ENCODE measurements at regions of chr2 and their contacts with region 1.

Region 1: GRCh38 chr2:238558456-238559099 is 131.9 kb downstream of the ASB1 start:
- DNase-seq: no peak
- H3K4me3 ChIP-seq: no peak overlapping the region
- CTCF ChIP-seq: no peak

Region 2: GRCh38 chr2:238632181-238633060 is 73.8 kb after region 1 on chr2:
- in situ Hi-C with region 1: loop called (anchors 5 kb)
- DNase-seq: no peak
- H3K4me3 ChIP-seq: no peak overlapping the region
- CTCF ChIP-seq: no peak

Measured in astrocyte of the cerebellum (primary cell).